ENCODE measurements at regions of chr20 and their contacts with region 1.

Region 1: DNA sequence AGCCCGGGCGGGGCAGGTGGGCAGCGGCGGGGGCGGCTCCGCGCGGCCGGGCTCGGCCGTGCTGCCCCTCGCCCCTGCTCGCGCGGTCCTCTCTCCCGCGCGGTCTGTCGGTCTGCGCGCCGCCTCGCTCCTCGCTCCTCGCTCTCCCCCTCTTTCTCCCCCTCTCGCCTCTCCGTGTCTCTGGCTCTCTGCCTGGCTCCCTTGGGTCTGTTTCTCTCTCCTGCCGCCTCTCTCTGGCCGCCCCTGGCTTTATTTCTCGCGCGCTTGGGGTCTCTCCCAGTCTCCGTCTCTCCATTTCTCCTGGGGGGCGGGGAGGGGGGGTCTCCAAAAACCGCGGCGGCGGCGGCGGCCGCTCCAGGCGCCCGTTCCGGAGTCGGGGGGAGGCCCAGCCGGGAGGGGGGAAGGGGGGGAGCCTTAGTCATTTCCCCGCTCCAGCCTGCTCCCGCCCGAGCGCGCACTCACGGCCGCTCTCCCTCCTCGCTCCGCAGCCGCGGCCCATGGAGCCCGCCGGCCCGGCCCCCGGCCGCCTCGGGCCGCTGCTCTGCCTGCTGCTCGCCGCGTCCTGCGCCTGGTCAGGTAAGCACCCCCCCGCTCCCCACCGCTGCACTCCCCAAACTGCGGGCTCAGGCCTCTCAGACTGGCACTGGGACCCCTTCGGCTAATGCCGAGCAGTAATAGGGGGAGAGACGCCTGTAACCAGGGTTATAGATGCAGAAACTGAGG is at the start of gene SIRPA:
- DNase-seq: peak; percentile 82 to 91 (median 89)
- ATAC-seq: peak; percentile 66 to 78
- H3K4me3 ChIP-seq: peak within 1 kb of the TSS; percentile 98
- H3K27ac ChIP-seq: peak within 1 kb of the TSS; percentile 74
- H3K4me1 ChIP-seq: peaks cover 6% of the 10 kb centered on the region
- H3K27me3 ChIP-seq: no peaks in the 10 kb centered on the region
- total RNA-seq, gene SIRPA: 28.1 to 45.2 (median 34.7) TPM

Region 2: GRCh38 chr20:1802385-1803060 is 92.6 kb before region 1 on chr20:
- intact Hi-C with region 1: loop called (anchors 2 to 10 kb)
- DNase-seq: peak; percentile 79 to 89 (median 88)
- ATAC-seq: peak; percentile 87 to 91
- H3K4me3 ChIP-seq: peak overlapping the region; percentile 55
- H3K27ac ChIP-seq: no peak overlapping the region
- H3K4me1 ChIP-seq: no peaks in the 10 kb centered on the region
- H3K27me3 ChIP-seq: no peaks in the 10 kb centered on the region

Region 3: GRCh38 chr20:1934721-1935573 is 39.8 kb after region 1 on chr20:
- intact Hi-C with region 1: loop called in 1 of 4 experiments (anchors 5 kb)
- DNase-seq: peak; percentile 89 to 94 (median 91)
- ATAC-seq: peak; percentile 78 to 83
- H3K4me3 ChIP-seq: no peak overlapping the region
- H3K27ac ChIP-seq: peak overlapping the region; percentile 83
- H3K4me1 ChIP-seq: peaks cover 11% of the 10 kb centered on the region
- H3K27me3 ChIP-seq: no peaks in the 10 kb centered on the region

Region 4: DNA sequence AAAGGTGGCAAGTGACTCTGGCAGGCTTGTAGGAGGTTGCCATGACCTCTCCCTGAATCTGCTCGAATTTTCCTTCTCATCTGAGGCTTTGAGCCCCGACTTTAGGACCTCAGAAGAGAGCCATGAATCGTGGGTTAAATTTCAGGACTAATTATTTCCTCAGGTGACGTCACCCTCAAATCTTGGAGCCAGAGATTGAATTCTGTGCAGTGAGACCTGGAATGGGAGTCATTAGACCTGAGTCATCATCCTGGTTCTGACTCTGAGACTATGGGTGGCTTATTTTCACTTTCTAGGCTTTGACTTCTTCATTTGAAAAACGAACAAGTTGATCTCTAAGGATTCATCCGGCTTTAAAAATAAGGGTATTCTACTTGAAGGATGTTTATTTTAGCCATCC is 147.3 kb after region 1 on chr20:
- intact Hi-C with region 1: no loop called
- DNase-seq: no peak
- ATAC-seq: no peak
- H3K4me3 ChIP-seq: no peak overlapping the region
- H3K27ac ChIP-seq: no peak overlapping the region
- H3K4me1 ChIP-seq: no peaks in the 10 kb centered on the region
- H3K27me3 ChIP-seq: no peaks in the 10 kb centered on the region